Heart left ventricle (tissue), 16 donors: ENCODE measurements at regions of chr4 and their contacts with region 1.

Region 1: GRCh38 chr4:48578132-48578968 is 88.3 kb downstream of the ZAR1 start:
- DNase-seq: peak in 4 of 5 donors; percentile 33 to 60 (median 50)
- ATAC-seq: peak; percentile 61 to 93 (median 88)
- H3K4me3 ChIP-seq: no peak overlapping the region
- H3K27ac ChIP-seq: peak overlapping the region in 1 of 12 donors; percentile 16
- H3K4me1 ChIP-seq: no peaks in the 10 kb centered on the region
- H3K27me3 ChIP-seq: no peaks in the 10 kb centered on the region
- CTCF ChIP-seq: peak; percentile 80 to 94 (median 90)
- POLR2A ChIP-seq: no peak

Region 2: DNA sequence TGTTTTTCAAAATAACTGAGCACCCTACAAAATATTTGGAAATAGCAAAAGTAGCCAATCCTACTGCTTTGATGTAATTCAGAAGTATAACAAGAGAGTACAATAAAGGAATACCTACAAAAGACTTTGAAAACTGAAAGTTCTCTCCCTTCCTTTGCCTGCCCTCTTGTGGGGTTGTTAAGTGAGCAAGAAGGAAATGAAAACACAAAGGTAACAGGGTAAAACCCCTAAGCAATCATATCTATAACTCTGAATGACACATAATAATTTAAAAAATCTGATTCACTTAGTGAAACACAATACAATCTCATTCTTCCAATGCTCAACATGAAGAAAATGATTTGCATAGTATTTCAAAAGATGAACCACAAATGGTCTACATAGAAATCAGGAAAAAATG is 103.5 kb after region 1 on chr4:
- intact Hi-C with region 1: loop called (anchors 1 to 5 kb)
- DNase-seq: no peak
- ATAC-seq: peak in 2 of 4 donors; percentile 53 to 61
- H3K4me3 ChIP-seq: no peak overlapping the region
- H3K27ac ChIP-seq: peak overlapping the region in 2 of 12 donors; percentile 12 to 21
- H3K4me1 ChIP-seq: peaks cover 0 to 34% (median 13%) of the 10 kb centered on the region in 12 donors
- H3K27me3 ChIP-seq: no peaks in the 10 kb centered on the region
- CTCF ChIP-seq: peak in 10 of 12 donors; percentile 41 to 63 (median 55)
- POLR2A ChIP-seq: no peak

Region 3: DNA sequence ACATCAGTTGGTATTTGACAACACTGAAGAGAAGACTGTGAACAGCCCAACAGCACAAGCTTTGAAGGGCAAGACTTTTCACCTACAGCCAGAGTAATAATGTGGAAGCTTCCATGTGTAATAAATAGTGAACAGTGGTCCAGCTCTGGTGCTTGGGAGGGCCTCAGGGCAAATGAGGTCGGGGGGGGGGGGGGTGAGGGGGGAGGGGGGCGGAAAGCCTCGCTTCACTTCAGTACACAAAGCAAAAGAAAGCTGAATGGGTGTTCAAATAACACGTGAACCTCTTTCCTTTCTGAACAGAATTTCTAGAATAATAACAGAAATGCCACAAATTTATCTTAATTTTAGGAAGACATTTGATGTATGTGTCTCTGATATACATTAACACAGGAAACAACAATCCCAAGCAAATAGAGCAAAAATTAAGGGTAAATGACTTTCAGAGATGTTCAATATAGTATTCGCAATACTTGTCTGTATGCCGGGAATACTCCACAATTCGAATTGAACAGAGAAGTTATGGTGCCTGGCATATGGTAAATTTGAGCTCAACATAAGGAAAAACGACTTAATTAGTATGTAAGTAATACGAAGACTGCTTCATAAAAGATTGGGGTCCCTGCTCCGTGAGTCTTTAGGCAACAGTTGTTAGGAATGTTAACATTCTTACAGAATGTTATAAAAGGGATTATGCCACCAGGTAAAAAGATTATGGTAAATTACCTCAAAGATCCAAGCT is 109.1 kb after region 1 on chr4:
- intact Hi-C with region 1: loop called in 7 of 10 experiments (anchors 1 to 5 kb)
- DNase-seq: no peak
- ATAC-seq: no peak
- H3K4me3 ChIP-seq: no peak overlapping the region
- H3K27ac ChIP-seq: no peak overlapping the region
- H3K4me1 ChIP-seq: peaks cover 0 to 46% (median 9%) of the 10 kb centered on the region in 12 donors
- H3K27me3 ChIP-seq: no peaks in the 10 kb centered on the region
- CTCF ChIP-seq: no peak
- POLR2A ChIP-seq: no peak

Region 4: DNA sequence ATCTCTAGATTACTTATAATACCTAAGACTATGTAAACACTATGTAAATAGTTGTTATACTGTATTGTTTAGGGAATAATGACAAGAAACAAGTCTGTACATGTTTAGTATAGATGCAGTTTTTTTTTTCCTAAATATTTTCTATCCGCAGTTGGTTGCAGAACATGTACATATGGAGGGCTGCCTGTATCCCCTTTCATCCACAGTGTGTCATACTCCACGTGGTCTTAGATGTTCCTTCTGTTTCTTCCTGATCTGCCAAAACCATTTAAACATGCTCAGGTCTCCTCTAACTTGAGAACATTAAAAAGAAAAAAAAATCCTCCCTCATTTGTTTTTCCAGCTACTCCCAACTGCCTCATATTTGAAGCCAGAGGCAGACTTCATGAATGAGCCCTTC is 266.5 kb after region 1 on chr4:
- intact Hi-C with region 1: loop called in 2 of 10 experiments (anchors 5 to 10 kb)
- DNase-seq: no peak
- ATAC-seq: no peak
- H3K4me3 ChIP-seq: no peak overlapping the region
- H3K27ac ChIP-seq: no peak overlapping the region
- H3K4me1 ChIP-seq: peaks cover 0 to 6% (median 0%) of the 10 kb centered on the region in 12 donors
- H3K27me3 ChIP-seq: no peaks in the 10 kb centered on the region
- CTCF ChIP-seq: no peak
- POLR2A ChIP-seq: no peak